CD4-positive, alpha-beta T cell (primary cell): ENCODE measurements at regions of chr3 and their contacts with region 1.

Region 1: GRCh38 chr3:152193673-152194267 is 75.0 kb upstream of the MBNL1 start:
- DNase-seq: peak in 6 of 14 experiments; percentile 6 to 84 (median 62)
- ATAC-seq: peak; percentile 63
- H3K4me3 ChIP-seq: peak overlapping the region; percentile 50
- H3K4me3 Mint-ChIP-seq: peak overlapping the region; percentile 90
- H3K27ac ChIP-seq: peak overlapping the region; percentile 42 to 48
- H3K27ac Mint-ChIP-seq: peak overlapping the region; percentile 96
- H3K4me1 ChIP-seq: peaks cover 40% of the 10 kb centered on the region
- H3K4me1 Mint-ChIP-seq: peaks cover 87% of the 10 kb centered on the region
- H3K27me3 ChIP-seq: no peaks in the 10 kb centered on the region
- H3K27me3 Mint-ChIP-seq: no peaks in the 10 kb centered on the region
- CTCF ChIP-seq: no peak

Region 2: GRCh38 chr3:152100491-152101132 is 93.2 kb before region 1 on chr3:
- CTCF ChIA-PET with region 1: no interaction called
- POLR2A ChIA-PET with region 1: no interaction called
- intact Hi-C with region 1: no loop called
- DNase-seq: peak in 3 of 14 experiments; percentile 25 to 47 (median 37)
- ATAC-seq: no peak
- H3K4me3 ChIP-seq: no peak overlapping the region
- H3K4me3 Mint-ChIP-seq: no peak overlapping the region
- H3K27ac ChIP-seq: no peak overlapping the region
- H3K27ac Mint-ChIP-seq: no peak overlapping the region
- H3K4me1 ChIP-seq: no peaks in the 10 kb centered on the region
- H3K4me1 Mint-ChIP-seq: peaks cover 5% of the 10 kb centered on the region
- H3K27me3 ChIP-seq: no peaks in the 10 kb centered on the region
- H3K27me3 Mint-ChIP-seq: no peaks in the 10 kb centered on the region
- CTCF ChIP-seq: no peak

Region 3: DNA sequence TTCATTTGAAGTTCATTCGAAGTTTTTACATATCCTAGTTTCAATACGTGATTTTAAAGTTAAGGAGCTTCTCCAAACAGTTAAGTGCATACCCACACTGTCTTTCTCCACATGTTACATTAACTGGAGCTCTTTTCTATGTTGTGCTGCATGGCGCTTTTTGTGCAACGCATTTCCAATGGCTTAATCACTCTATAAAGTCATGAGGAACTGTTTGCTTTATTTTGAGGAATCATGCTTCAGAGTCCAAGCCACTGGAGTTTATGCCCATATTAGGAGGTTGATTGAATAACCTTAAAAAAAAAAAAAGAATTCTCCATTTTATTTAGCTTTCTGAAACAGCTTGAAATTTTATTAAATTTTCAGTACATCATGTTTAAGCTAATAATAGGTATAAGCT is 34.4 kb before region 1 on chr3:
- CTCF ChIA-PET with region 1: no interaction called
- POLR2A ChIA-PET with region 1: no interaction called
- intact Hi-C with region 1: no loop called
- DNase-seq: no peak
- ATAC-seq: no peak
- H3K4me3 ChIP-seq: no peak overlapping the region
- H3K4me3 Mint-ChIP-seq: no peak overlapping the region
- H3K27ac ChIP-seq: no peak overlapping the region
- H3K27ac Mint-ChIP-seq: no peak overlapping the region
- H3K4me1 ChIP-seq: no peaks in the 10 kb centered on the region
- H3K4me1 Mint-ChIP-seq: no peaks in the 10 kb centered on the region
- H3K27me3 ChIP-seq: no peaks in the 10 kb centered on the region
- H3K27me3 Mint-ChIP-seq: no peaks in the 10 kb centered on the region
- CTCF ChIP-seq: no peak

Region 4: DNA sequence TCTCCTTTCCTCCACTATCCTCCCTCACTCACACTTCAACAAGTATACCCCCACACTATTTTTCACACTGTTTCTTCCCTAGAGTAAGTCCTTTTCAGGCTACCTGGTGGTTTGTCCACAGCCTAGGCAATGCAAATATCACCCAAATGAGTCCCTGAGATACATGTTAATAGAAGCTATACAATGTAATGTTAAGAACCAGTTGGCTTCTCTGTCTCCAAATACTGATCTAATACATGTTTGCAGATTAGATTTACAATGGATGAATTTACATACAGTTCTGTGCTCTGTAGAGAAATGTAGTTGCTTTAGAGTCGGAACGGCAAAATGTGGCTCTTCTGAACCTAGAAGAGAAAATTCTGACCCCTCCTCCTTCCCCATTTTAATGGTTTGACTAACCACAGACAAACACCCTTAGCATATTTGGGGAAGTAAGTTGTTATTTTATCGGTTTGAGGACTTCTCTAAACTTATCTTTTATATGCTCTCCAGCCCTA is 11.4 kb after region 1 on chr3:
- CTCF ChIA-PET with region 1: no interaction called
- POLR2A ChIA-PET with region 1: interaction called, 24 read pairs
- intact Hi-C with region 1: loop called in 1 of 2 experiments (anchors 1 kb)
- DNase-seq: peak in 4 of 14 experiments; percentile 18 to 71 (median 66)
- ATAC-seq: peak; percentile 45
- H3K4me3 ChIP-seq: peak overlapping the region; percentile 47
- H3K4me3 Mint-ChIP-seq: peak overlapping the region; percentile 93
- H3K27ac ChIP-seq: peak overlapping the region; percentile 58 to 66
- H3K27ac Mint-ChIP-seq: peak overlapping the region; percentile 96
- H3K4me1 ChIP-seq: peaks cover 28% of the 10 kb centered on the region
- H3K4me1 Mint-ChIP-seq: peaks cover 87% of the 10 kb centered on the region
- H3K27me3 ChIP-seq: no peaks in the 10 kb centered on the region
- H3K27me3 Mint-ChIP-seq: no peaks in the 10 kb centered on the region
- CTCF ChIP-seq: no peak

Region 5: DNA sequence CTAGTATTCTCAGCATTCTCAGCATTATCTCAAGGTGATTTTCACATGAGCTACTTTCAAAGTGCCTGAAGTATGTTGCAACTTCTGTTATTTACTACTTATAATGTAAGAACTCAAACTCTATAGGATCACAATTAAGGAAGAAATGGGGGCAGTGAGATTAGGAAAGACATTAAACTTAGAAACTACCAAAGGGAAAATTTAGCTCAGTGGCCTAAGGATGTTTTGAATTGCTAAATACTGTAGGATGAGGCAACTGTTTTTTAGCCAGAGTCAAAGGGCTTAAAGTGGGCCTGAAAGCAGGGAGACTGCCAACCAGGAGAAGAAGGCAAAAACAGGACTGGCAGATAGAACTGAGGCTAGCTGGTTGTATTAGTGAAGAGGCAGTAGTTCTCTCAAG is 19.4 kb after region 1 on chr3:
- CTCF ChIA-PET with region 1: no interaction called
- POLR2A ChIA-PET with region 1: interaction called, 24 read pairs
- intact Hi-C with region 1: no loop called
- DNase-seq: no peak
- ATAC-seq: no peak
- H3K4me3 ChIP-seq: no peak overlapping the region
- H3K4me3 Mint-ChIP-seq: no peak overlapping the region
- H3K27ac ChIP-seq: no peak overlapping the region
- H3K27ac Mint-ChIP-seq: peak overlapping the region; percentile 31
- H3K4me1 ChIP-seq: peaks cover 24% of the 10 kb centered on the region
- H3K4me1 Mint-ChIP-seq: peaks cover 71% of the 10 kb centered on the region
- H3K27me3 ChIP-seq: no peaks in the 10 kb centered on the region
- H3K27me3 Mint-ChIP-seq: no peaks in the 10 kb centered on the region
- CTCF ChIP-seq: no peak

Region 6: DNA sequence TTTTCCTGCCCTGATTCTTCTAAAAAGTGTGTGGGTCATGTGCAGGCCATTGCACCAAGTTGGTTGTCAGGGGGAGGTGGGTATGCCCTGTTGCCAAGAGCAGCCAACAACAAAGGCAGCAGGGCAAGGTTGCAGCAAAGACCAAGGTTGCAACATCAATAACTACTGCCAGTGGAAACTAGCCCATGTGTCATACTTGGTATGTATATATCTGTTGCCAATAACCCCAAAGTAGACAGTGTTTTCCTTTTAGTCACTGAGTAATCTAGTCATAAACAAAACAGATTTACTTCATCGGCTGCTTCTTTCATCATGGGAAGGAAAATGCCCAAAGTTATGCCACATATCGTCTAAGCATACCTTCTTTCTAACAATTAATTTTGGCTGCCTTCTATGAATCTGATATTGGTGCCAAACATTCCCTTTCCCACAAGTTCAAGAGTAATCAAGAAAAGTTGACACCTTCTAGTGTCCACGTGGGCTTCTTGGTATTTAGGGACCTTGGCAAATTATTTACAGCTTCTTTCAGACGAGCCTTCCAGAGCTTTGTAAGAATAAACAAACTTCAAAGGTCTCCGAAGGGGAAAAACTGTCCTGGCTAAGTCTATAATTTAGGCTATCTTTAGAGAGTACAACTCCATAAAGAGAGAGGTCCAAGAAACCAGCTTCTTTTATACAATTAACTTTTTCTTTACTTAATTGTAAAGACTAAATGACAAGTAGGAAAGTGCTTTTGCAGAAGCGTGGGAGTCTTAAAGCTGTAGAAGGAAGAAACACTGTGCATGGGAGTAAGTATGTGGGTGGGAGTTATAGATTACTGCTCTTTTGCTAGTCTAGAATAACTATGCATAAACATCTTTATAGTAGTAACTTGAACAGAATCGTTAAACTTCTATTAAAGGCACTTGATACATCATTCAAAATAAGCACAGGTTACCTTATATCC is 65.0 kb after region 1 on chr3:
- CTCF ChIA-PET with region 1: interaction called, 3 read pairs
- POLR2A ChIA-PET with region 1: interaction called, 24 read pairs
- intact Hi-C with region 1: no loop called
- DNase-seq: peak in 12 of 14 experiments; percentile 35 to 90 (median 58)
- ATAC-seq: peak; percentile 65
- H3K4me3 ChIP-seq: peak overlapping the region; percentile 19
- H3K4me3 Mint-ChIP-seq: peak overlapping the region; percentile 86
- H3K27ac ChIP-seq: peak overlapping the region; percentile 81 to 86
- H3K27ac Mint-ChIP-seq: peak overlapping the region; percentile 96
- H3K4me1 ChIP-seq: peaks cover 57% of the 10 kb centered on the region
- H3K4me1 Mint-ChIP-seq: peaks cover 96% of the 10 kb centered on the region
- H3K27me3 ChIP-seq: no peaks in the 10 kb centered on the region
- H3K27me3 Mint-ChIP-seq: no peaks in the 10 kb centered on the region
- CTCF ChIP-seq: no peak

Region 7: GRCh38 chr3:152281133-152281713 is 87.5 kb after region 1 on chr3:
- CTCF ChIA-PET with region 1: no interaction called
- POLR2A ChIA-PET with region 1: interaction called, 12 read pairs
- intact Hi-C with region 1: no loop called
- DNase-seq: no peak
- ATAC-seq: no peak
- H3K4me3 ChIP-seq: peak overlapping the region; percentile 34
- H3K4me3 Mint-ChIP-seq: peak overlapping the region; percentile 79
- H3K27ac ChIP-seq: peak overlapping the region; percentile 2 to 53
- H3K27ac Mint-ChIP-seq: peak overlapping the region; percentile 82
- H3K4me1 ChIP-seq: peaks cover 31% of the 10 kb centered on the region
- H3K4me1 Mint-ChIP-seq: peaks cover 86% of the 10 kb centered on the region
- H3K27me3 ChIP-seq: no peaks in the 10 kb centered on the region
- H3K27me3 Mint-ChIP-seq: no peaks in the 10 kb centered on the region
- CTCF ChIP-seq: no peak

Region 8: GRCh38 chr3:152834776-152835600 is 641.2 kb after region 1 on chr3 and contains the start of gene P2RY1:
- CTCF ChIA-PET with region 1: no interaction called
- POLR2A ChIA-PET with region 1: no interaction called
- intact Hi-C with region 1: no loop called
- DNase-seq: peak in 4 of 14 experiments; percentile 1 to 47 (median 28)
- ATAC-seq: peak; percentile 24
- H3K4me3 ChIP-seq: peak within 1 kb of the TSS; percentile 49
- H3K4me3 Mint-ChIP-seq: peak within 1 kb of the TSS; percentile 84
- H3K27ac ChIP-seq: no peak within 1 kb of the TSS
- H3K27ac Mint-ChIP-seq: no peak within 1 kb of the TSS
- H3K4me1 ChIP-seq: peaks cover 15% of the 10 kb centered on the region
- H3K4me1 Mint-ChIP-seq: peaks cover 9% of the 10 kb centered on the region
- H3K27me3 ChIP-seq: peaks cover 8 to 25% of the 10 kb centered on the region in 2 experiments
- H3K27me3 Mint-ChIP-seq: peaks cover 36% of the 10 kb centered on the region
- CTCF ChIP-seq: no peak
- total RNA-seq, gene P2RY1: 0.11 to 0.17 TPM